ENCODE measurements at regions of chr14 and their contacts with region 1.

Region 1: GRCh38 chr14:23379366-23380196 is 2.7 kb downstream of the CMTM5 start:
- DNase-seq: peak; percentile 86
- CTCF ChIP-seq: peak; percentile 92

Region 2: GRCh38 chr14:23269193-23269592 is 110.4 kb before region 1 on chr14:
- CTCF ChIA-PET with region 1: interaction called, 45 read pairs
- POLR2A ChIA-PET with region 1: no interaction called
- DNase-seq: no peak
- CTCF ChIP-seq: no peak

Region 3: DNA sequence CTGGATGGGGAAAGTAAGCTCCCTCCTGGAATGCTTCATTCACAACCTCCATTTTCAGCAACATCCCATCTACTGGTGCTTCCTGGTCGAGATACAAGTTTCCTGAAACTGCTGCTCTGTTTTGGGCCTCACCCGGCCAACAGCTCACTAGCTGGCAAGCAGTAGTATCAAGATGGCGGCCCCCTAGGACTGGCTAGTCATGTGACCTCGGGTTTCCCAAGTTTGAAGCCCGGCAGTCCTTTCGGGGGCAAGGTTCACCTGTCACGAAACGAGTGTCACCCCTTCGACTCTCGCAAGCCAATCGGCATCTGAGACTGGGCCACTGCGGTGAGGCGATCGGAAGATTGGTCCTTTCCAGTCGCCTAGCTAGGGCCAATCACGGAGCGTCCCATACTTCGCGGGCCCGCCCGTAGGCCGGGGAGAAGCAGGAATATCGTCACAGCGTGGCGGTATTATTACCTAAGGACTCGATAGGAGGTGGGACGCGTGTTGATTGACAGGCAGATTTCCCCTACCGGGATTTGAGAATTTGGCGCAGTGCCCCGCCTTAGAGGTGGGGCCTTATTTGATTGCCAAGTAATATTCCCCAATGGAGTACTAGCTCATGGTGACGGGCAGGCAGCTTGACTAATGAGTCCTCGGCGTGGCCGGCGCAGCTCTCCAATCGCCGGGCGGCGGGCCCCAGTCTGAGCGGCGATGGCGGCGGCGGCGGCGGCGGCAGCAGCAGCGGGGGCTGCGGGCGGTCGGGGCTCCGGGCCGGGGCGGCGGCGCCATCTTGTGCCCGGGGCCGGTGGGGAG is 58.6 kb before region 1 on chr14 and contains the start of gene PABPN1:
- CTCF ChIA-PET with region 1: interaction called, 54 read pairs
- POLR2A ChIA-PET with region 1: no interaction called
- DNase-seq: peak; percentile 96
- CTCF ChIP-seq: no peak

Region 4: GRCh38 chr14:23335623-23336022 is 44.0 kb before region 1 on chr14:
- CTCF ChIA-PET with region 1: interaction called, 10 read pairs
- POLR2A ChIA-PET with region 1: no interaction called
- DNase-seq: no peak
- CTCF ChIP-seq: no peak

Measured in GM10248 (cell line).